RWPE1 (cell line): ENCODE measurements at regions of chr22 and their contacts with region 1.

Region 1: DNA sequence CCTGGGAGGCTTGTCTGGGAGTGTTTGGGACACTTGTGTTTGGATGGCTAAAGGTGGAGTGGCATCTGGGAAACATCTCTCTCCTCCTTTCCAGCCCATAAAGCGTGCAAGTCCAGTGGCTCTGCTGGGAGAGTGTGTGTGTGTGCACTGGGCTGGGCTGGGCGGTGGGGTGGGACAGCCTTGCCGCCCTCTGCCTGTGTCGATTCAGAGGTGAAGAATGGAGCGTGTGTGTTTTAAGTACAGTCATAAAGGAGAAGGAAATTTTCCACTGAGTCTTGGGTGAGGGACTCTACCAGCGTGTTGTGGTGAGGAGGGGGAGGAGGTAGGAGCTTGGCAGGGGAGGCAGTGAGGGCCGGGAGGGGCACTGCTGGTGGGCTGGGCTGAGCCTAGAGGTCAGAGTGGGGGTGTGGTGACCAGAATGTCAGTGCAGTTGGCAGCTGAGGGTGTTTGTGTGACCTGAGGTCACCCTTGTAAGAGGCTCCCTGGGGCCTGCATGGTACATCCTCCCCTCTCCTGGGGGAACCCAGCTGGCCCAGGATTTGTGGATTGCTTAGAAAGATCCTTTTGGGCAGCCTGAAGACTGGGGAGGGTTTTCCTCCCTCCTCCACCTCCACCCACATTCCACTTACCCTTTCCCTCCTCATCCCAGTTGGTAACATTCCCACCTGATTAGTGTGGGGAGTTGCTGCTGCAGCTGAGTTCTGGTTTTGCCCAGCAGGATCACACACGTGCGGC is 1.7 kb downstream of the TIMP3 start:
- DNase-seq: peak; percentile 41
- H3K27ac ChIP-seq: peak overlapping the region; percentile 90
- CTCF ChIP-seq: no peak

Region 2: GRCh38 chr22:32985899-32986765 is 182.9 kb after region 1 on chr22:
- CTCF ChIA-PET with region 1: interaction called, 10 read pairs
- POLR2A ChIA-PET with region 1: no interaction called
- DNase-seq: peak; percentile 59
- H3K27ac ChIP-seq: peak overlapping the region; percentile 70
- CTCF ChIP-seq: no peak; the same call in 1 of the 2 replicates